Activated naive CD4-positive, alpha-beta T cell treated with anti-CD3 and anti-CD28 coated beads for 36 hours (primary cell): ENCODE measurements at regions of chr3 and their contacts with region 1.

Region 1: DNA sequence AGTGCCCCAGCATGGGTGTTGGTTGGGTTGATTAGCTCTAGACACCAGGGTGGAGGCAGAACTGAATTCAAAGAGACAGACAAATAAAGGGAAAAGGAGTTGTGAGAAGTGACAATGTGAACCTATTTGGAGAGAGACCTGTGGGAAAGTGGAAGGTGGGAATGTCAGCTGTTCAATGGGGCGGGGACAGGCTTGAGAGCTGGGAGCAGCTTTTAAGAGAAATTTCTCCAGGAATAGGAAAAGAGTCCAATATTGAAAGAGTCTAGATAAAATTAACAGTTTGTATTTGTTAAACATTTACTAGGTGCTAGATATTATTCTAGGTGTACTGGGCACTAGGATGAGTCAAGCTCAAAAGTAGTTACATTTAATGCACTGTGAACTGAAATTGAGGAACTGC is 225.3 kb downstream of the GAP43 start:
- DNase-seq: no peak
- H3K4me3 Mint-ChIP-seq: no peak overlapping the region
- H3K27ac Mint-ChIP-seq: no peak overlapping the region
- H3K4me1 Mint-ChIP-seq: no peaks in the 10 kb centered on the region
- H3K27me3 Mint-ChIP-seq: peaks cover 4% of the 10 kb centered on the region

Region 2: GRCh38 chr3:115836944-115837343 is 11.7 kb before region 1 on chr3:
- CTCF ChIA-PET with region 1: interaction called, 12 read pairs
- intact Hi-C with region 1: no loop called
- DNase-seq: no peak
- H3K4me3 Mint-ChIP-seq: no peak overlapping the region
- H3K27ac Mint-ChIP-seq: no peak overlapping the region
- H3K4me1 Mint-ChIP-seq: no peaks in the 10 kb centered on the region
- H3K27me3 Mint-ChIP-seq: peaks cover 4% of the 10 kb centered on the region